ENCODE measurements at regions of chr7 and their contacts with region 1.

Region 1: GRCh38 chr7:27952456-27953285 is 212.7 kb downstream of the TAX1BP1 start:
- DNase-seq: no peak
- ATAC-seq: peak in 2 of 4 donors; percentile 40 to 53
- H3K4me3 ChIP-seq: no peak overlapping the region
- H3K27ac ChIP-seq: no peak overlapping the region
- H3K4me1 ChIP-seq: no peaks in the 10 kb centered on the region
- H3K27me3 ChIP-seq: peaks cover 0 to 1% (median 0%) of the 10 kb centered on the region in 3 donors
- CTCF ChIP-seq: no peak

Region 2: GRCh38 chr7:27723085-27723484 is 229.6 kb before region 1 on chr7:
- intact Hi-C with region 1: no loop called
- DNase-seq: no peak
- ATAC-seq: peak in 3 of 4 donors; percentile 73 to 89 (median 75)
- H3K4me3 ChIP-seq: no peak overlapping the region
- H3K27ac ChIP-seq: no peak overlapping the region
- H3K4me1 ChIP-seq: no peaks in the 10 kb centered on the region
- H3K27me3 ChIP-seq: no peaks in the 10 kb centered on the region
- CTCF ChIP-seq: peak; percentile 19

Region 3: GRCh38 chr7:27994639-27995038 is 42.0 kb after region 1 on chr7:
- intact Hi-C with region 1: no loop called
- DNase-seq: no peak
- ATAC-seq: peak in 3 of 4 donors; percentile 47 to 79 (median 60)
- H3K4me3 ChIP-seq: no peak overlapping the region
- H3K27ac ChIP-seq: no peak overlapping the region
- H3K4me1 ChIP-seq: peaks cover 18% of the 10 kb centered on the region
- H3K27me3 ChIP-seq: no peaks in the 10 kb centered on the region
- CTCF ChIP-seq: no peak

Region 4: DNA sequence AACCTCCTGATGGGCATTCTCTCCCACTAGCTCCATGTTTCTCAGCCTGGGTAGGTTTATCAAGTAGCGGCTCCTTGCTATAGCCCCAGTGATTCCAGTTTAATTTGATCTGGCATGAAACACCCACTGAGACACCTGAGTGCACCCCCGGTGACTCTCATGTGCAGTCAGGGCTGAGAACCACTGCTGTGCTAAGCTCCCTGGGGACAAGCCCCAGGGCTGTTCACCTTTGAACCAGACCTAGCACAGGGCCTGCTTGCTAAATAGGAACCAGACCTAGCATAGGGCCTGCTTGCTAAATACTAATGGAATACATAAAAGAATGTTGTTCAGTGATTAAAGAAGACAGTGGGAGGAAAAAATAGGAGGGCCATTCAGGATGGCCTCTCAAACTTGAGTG is 60.3 kb after region 1 on chr7:
- intact Hi-C with region 1: loop called in 1 of 2 experiments (anchors 5 kb)
- DNase-seq: no peak
- ATAC-seq: no peak
- H3K4me3 ChIP-seq: no peak overlapping the region
- H3K27ac ChIP-seq: no peak overlapping the region
- H3K4me1 ChIP-seq: peaks cover 24% of the 10 kb centered on the region
- H3K27me3 ChIP-seq: no peaks in the 10 kb centered on the region
- CTCF ChIP-seq: no peak

Measured in psoas muscle (tissue), 8 donors.